Activated CD8-positive, alpha-beta T cell treated with anti-CD3 and anti-CD28 coated beads for 36 hours (primary cell): ENCODE measurements at regions of chr2 and their contacts with region 1.

Region 1: GRCh38 chr2:234446404-234447076 is 50.3 kb downstream of the ARL4C start:
- DNase-seq: peak; percentile 90
- ATAC-seq: peak; percentile 94
- H3K4me3 Mint-ChIP-seq: peak overlapping the region; percentile 55
- H3K27ac Mint-ChIP-seq: peak overlapping the region; percentile 94
- H3K4me1 Mint-ChIP-seq: peaks cover 71% of the 10 kb centered on the region
- H3K27me3 Mint-ChIP-seq: no peaks in the 10 kb centered on the region
- CTCF ChIP-seq: no peak

Region 2: DNA sequence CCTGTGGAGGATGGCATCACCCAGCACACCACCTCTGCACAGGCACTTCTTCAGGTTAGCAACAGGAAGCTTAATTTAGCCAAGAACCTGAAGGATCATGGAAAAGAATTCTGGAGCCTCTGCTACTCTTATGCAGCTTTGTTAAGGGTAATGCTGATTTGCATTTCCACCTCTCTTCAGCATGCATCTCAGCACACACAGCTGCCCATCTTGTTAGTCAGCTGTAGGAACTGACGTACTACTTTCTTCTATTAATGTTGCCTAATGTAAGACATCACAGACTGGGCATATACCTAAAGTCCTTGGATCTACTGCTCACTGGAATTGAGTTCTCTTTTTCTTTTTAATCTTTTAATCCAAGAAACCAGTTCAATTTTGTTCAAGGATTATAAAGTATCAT is 215.1 kb before region 1 on chr2:
- CTCF ChIA-PET with region 1: no interaction called
- POLR2A ChIA-PET with region 1: no interaction called
- intact Hi-C with region 1: no loop called
- DNase-seq: no peak
- ATAC-seq: no peak
- H3K4me3 Mint-ChIP-seq: no peak overlapping the region
- H3K27ac Mint-ChIP-seq: no peak overlapping the region
- H3K4me1 Mint-ChIP-seq: no peaks in the 10 kb centered on the region
- H3K27me3 Mint-ChIP-seq: no peaks in the 10 kb centered on the region
- CTCF ChIP-seq: no peak

Region 3: DNA sequence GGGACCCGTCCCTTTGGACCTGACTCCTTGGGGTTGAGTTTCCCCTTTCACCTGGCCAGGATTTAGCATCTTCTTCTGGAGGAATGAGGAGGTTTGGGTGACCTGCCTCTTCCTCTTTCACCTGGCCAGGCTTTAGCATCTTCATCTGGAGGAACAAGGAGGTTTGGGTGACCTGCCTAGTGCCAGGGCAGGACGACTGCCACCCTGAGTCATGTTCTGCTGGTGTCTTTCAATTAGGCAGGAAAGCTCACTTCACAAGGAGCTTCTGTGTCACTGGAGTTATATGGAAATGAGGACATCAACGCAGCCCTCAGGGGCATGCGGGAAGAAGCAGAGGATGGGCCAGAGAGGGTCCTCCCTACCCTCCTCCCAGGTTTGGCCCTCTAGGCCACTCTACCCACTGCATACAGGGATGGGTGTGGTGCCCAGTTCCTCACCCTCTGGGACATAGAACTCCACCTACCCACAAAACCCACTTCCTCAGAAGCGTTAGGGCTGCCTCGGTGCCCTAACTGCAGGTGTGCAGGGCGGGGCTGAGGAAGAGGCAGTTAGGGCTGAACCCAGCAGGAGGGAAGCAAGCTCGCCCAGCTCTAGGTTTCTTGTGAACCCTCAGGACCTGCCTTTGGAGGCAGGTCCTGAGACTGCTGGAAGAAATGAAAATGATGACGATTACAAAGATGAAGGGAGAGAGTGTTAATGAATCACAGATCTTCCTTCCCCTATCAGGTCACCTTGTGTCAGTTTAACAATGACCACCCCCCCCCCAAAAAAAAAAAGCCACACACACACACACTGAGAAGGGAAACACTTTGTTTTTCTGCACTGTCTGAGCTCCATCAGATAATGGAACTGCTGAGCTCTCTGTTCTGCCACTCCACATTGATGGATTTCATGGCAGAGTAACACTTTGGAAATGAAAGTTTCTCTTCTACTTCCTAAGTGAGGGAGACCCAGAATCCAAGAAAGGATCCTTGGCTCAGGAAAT is 20.6 kb before region 1 on chr2:
- CTCF ChIA-PET with region 1: interaction called, 4 read pairs
- POLR2A ChIA-PET with region 1: interaction called, 14 read pairs
- intact Hi-C with region 1: no loop called
- DNase-seq: peak; percentile 73
- ATAC-seq: peak; percentile 61
- H3K4me3 Mint-ChIP-seq: peak overlapping the region; percentile 55
- H3K27ac Mint-ChIP-seq: peak overlapping the region; percentile 88
- H3K4me1 Mint-ChIP-seq: peaks cover 81% of the 10 kb centered on the region
- H3K27me3 Mint-ChIP-seq: no peaks in the 10 kb centered on the region
- CTCF ChIP-seq: no peak

Region 4: GRCh38 chr2:234512884-234513669 is 66.5 kb after region 1 on chr2:
- CTCF ChIA-PET with region 1: no interaction called
- POLR2A ChIA-PET with region 1: no interaction called
- intact Hi-C with region 1: no loop called
- DNase-seq: no peak
- ATAC-seq: no peak
- H3K4me3 Mint-ChIP-seq: no peak overlapping the region
- H3K27ac Mint-ChIP-seq: no peak overlapping the region
- H3K4me1 Mint-ChIP-seq: peaks cover 4% of the 10 kb centered on the region
- H3K27me3 Mint-ChIP-seq: no peaks in the 10 kb centered on the region
- CTCF ChIP-seq: no peak